AG04450 (cell line): ENCODE measurements at regions of chr6 and their contacts with region 1.

Region 1: GRCh38 chr6:137944793-137945498 is 77.9 kb downstream of the TNFAIP3 start:
- DNase-seq: no peak
- H3K4me3 ChIP-seq: no peak overlapping the region
- H3K27ac ChIP-seq: no peak overlapping the region
- H3K27me3 ChIP-seq: no peaks in the 10 kb centered on the region
- CTCF ChIP-seq: peak; percentile 86

Region 2: DNA sequence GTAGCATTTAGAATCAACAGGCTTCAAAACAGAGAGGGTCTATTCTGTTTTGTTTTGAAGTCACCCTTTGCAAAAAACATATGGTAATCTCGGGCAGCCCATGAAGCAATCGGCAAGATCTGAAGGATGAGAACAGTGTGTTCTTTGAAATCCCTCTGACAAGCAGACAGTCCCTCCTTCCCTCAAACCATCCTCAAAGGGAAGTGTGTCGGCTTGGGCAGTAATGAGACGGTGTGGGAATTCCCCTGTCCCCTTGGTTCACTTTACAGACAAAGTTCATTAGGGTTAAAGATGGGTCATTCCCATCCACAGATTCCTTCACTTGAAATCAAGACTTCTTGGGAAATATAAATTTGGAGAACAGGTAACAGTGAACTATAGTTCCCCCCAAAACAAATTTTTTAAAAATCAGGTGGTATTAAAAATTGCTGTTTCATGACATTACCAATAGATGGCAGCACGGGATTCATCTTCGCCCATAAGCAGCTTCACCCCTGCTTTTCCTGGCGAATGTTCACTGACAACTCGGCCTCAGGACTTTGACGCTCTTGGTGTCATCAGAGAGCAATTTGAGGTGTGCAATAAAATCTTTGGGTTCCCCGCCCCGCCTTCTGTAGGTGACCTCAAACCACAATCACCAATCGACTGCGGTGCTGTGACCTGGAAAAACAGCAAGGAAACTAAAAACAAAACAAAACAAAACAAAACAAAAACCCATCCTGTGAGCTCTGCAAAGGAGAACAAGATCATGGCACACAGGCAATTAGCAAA is 237.2 kb before region 1 on chr6:
- CTCF ChIA-PET with region 1: interaction called, 116 read pairs
- POLR2A ChIA-PET with region 1: no interaction called
- DNase-seq: peak; percentile 47
- H3K4me3 ChIP-seq: no peak overlapping the region
- H3K27ac ChIP-seq: peak overlapping the region; percentile 11
- H3K27me3 ChIP-seq: no peaks in the 10 kb centered on the region
- CTCF ChIP-seq: peak; percentile 80

Region 3: GRCh38 chr6:137866914-137867684 is 77.8 kb before region 1 on chr6 and contains the start of gene TNFAIP3:
- CTCF ChIA-PET with region 1: interaction called, 30 read pairs
- POLR2A ChIA-PET with region 1: no interaction called
- DNase-seq: peak; percentile 90
- H3K4me3 ChIP-seq: peak within 1 kb of the TSS; percentile 89
- H3K27ac ChIP-seq: peak within 1 kb of the TSS; percentile 57
- H3K27me3 ChIP-seq: no peaks in the 10 kb centered on the region
- CTCF ChIP-seq: peak; percentile 60
- polyA plus RNA-seq, gene TNFAIP3: 16.7 and 19.5 TPM in 2 replicates

Region 4: GRCh38 chr6:137927777-137928218 is 17.1 kb before region 1 on chr6:
- CTCF ChIA-PET with region 1: interaction called, 19 read pairs
- POLR2A ChIA-PET with region 1: no interaction called
- DNase-seq: no peak
- H3K4me3 ChIP-seq: no peak overlapping the region
- H3K27ac ChIP-seq: peak overlapping the region; percentile 48
- H3K27me3 ChIP-seq: peaks cover 2% of the 10 kb centered on the region
- CTCF ChIP-seq: no peak

Region 5: DNA sequence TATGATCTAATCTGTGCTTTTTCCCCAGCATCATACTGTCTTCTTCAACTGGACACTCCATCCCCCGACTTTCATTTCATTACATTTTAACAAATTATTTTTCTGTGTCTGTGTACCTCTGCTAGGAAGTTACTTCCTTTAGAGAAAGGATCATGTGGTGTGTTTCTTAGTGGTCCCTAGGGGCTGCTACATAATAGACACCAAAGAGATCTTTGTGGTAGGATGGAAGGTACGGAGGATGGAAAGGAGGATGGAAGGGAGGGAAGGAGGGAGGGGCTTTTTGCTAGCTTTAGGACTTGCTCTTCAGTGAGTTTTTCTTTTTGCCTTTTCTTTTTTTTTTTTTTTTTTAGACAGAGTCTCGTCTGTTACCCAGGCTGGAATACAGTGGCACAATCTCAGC is 17.8 kb after region 1 on chr6:
- CTCF ChIA-PET with region 1: interaction called, 12 read pairs
- POLR2A ChIA-PET with region 1: no interaction called
- DNase-seq: no peak
- H3K4me3 ChIP-seq: no peak overlapping the region
- H3K27ac ChIP-seq: no peak overlapping the region
- H3K27me3 ChIP-seq: no peaks in the 10 kb centered on the region
- CTCF ChIP-seq: no peak

Region 6: GRCh38 chr6:137982418-137983189 is 37.7 kb after region 1 on chr6:
- CTCF ChIA-PET with region 1: no interaction called
- POLR2A ChIA-PET with region 1: no interaction called
- DNase-seq: no peak
- H3K4me3 ChIP-seq: no peak overlapping the region
- H3K27ac ChIP-seq: no peak overlapping the region
- H3K27me3 ChIP-seq: peaks cover 3% of the 10 kb centered on the region
- CTCF ChIP-seq: no peak

Region 7: DNA sequence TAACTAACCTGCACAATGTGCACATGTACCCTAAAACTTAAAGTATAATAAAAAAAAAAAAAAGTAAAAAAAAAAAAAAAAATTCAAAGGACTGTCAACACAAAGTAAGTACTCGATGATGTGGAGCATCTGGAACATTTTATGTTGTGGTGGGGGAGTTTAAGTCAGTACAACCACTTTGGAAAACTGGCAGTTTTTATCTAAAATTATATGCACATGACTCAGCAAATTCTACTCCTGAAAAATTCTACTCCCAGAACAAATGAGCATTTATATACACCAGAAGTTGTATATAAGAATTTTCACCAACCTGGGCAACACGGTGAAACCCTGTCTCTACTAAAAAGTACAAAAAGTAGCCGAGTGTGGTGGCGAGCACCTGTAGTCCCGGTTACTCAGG is 791.7 kb after region 1 on chr6:
- CTCF ChIA-PET with region 1: no interaction called
- POLR2A ChIA-PET with region 1: no interaction called
- DNase-seq: no peak
- H3K4me3 ChIP-seq: no peak overlapping the region
- H3K27ac ChIP-seq: no peak overlapping the region
- H3K27me3 ChIP-seq: no peaks in the 10 kb centered on the region
- CTCF ChIP-seq: no peak